Ovary (tissue), 10 donors: ENCODE measurements at regions of chrX and their contacts with region 1.

Region 1: DNA sequence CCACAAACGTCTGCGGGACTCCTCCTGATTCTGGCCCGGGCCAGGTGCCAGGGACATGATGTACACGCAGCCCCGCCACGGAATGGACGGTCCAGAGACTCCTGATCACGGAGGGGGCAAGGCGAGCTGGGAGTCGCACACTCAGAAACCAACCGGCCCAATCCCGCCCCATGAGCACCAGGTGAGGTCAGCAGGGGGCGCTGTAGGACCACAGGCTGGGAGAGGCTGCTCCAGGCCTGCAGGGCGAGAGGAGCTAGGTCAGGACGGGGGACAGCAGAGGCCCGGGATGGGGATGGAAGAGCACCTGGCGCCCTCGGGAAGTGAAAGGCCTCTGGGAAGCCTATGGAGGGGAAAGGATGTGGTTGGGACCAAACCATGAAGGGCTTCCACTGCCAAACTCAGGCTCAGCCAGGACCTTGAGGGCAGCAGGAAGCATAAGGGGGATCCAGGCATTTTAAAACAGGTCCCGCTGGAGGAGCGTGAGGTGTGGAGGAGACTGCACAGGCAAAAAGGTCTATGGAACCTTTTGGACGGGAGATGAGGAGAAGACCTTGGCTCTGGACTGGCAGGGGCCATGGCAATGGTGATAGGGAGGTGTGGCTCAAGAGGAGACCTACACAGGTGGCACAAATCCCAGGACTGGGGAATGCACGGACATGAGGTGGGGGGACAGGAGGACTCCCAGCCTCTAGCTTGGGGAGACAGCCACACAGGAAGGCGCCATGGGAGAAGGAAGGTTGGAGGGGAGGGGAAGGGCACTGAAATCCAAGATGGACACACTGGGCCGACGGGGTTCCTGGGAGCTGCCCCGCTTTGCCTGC is 79.2 kb downstream of the MTMR1 start:
- DNase-seq: peak; percentile 68 to 87 (median 78)
- H3K4me3 ChIP-seq: no peak overlapping the region
- H3K27ac ChIP-seq: no peak overlapping the region
- H3K4me1 ChIP-seq: no peaks in the 10 kb centered on the region
- H3K27me3 ChIP-seq: no peaks in the 10 kb centered on the region
- CTCF ChIP-seq: peak; percentile 31 to 69 (median 63)
- EP300 ChIP-seq: no peak
- POLR2A ChIP-seq: no peak

Region 2: DNA sequence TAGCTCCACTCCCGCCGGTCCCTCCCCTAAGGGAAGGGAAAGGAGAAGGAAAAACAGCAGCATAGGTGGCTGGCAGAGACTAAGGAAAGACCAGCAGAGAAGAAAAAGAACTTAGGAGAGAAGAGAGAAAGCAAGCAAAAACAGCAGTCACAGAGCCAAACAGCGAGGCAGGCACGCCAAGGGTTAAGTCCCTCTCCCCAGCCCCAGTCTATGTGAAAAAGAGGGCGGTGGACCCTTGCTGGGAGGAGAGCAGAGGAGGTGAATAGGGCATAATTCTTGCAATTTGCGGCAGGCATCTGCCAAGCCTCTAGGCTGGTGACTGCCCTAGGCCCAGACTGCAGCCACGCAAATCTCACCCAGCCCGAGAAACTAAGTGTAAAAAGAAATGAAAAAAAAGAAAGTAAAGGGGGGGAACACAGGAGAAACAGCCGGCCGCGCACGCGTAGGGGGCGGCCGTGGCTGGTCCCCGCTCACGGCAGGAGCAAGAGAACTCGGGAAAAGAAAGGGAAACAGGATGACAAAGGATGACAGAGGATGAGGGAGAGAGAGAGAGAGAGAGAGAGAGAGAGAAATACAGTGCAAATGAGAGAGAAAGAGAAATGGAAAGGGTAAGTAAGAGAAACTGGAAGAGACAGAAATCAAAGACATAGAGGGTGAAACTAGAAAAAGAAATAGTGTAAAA is 942.0 kb before region 1 on chrX:
- intact Hi-C with region 1: no loop called
- DNase-seq: peak in 3 of 5 donors; percentile 20 to 45 (median 22)
- H3K4me3 ChIP-seq: peak overlapping the region; percentile 23
- H3K27ac ChIP-seq: peak overlapping the region in 1 of 2 donors; percentile 62
- H3K4me1 ChIP-seq: no peaks in the 10 kb centered on the region
- H3K27me3 ChIP-seq: no peaks in the 10 kb centered on the region
- CTCF ChIP-seq: no peak
- EP300 ChIP-seq: no peak
- POLR2A ChIP-seq: no peak

Region 3: DNA sequence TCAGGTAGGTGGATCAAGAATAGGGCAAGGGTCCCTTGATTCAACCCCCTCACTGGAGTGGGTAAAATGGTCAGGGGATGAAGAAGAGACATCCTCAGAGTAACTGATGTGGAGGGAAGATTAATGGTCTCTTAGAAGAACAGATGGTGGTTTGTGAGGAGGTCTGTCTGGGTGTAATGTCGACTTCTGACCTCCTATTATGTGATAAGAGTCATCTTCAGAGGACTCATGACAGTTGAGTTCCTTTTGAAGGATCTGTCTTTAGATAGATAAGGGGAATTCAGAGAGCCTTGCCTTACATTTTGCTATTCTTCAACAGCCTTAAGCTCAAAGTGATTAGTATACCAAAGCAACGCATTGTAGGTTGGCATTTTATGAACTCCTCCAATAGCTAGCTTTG is 918.4 kb before region 1 on chrX:
- intact Hi-C with region 1: no loop called
- DNase-seq: no peak
- H3K4me3 ChIP-seq: no peak overlapping the region
- H3K27ac ChIP-seq: no peak overlapping the region
- H3K4me1 ChIP-seq: no peaks in the 10 kb centered on the region
- H3K27me3 ChIP-seq: no peaks in the 10 kb centered on the region
- CTCF ChIP-seq: no peak
- EP300 ChIP-seq: no peak
- POLR2A ChIP-seq: no peak

Region 4: GRCh38 chrX:151082076-151082948 is 310.0 kb after region 1 on chrX:
- intact Hi-C with region 1: loop called (anchors 1 to 5 kb)
- DNase-seq: peak; percentile 30 to 75 (median 57)
- H3K4me3 ChIP-seq: no peak overlapping the region
- H3K27ac ChIP-seq: no peak overlapping the region
- H3K4me1 ChIP-seq: no peaks in the 10 kb centered on the region
- H3K27me3 ChIP-seq: no peaks in the 10 kb centered on the region
- CTCF ChIP-seq: peak; percentile 71 to 90 (median 74)
- EP300 ChIP-seq: no peak
- POLR2A ChIP-seq: no peak